ENCODE measurements at regions of chr2 and their contacts with region 1.

Region 1: GRCh38 chr2:230541934-230542380 is 126.0 kb downstream of the SP100 start:
- DNase-seq: no peak
- ATAC-seq: no peak
- H3K4me3 ChIP-seq: no peak overlapping the region
- H3K27ac ChIP-seq: no peak overlapping the region
- H3K4me1 ChIP-seq: no peaks in the 10 kb centered on the region
- H3K27me3 ChIP-seq: no peaks in the 10 kb centered on the region
- CTCF ChIP-seq: no peak

Region 2: GRCh38 chr2:230286048-230286447 is 255.9 kb before region 1 on chr2:
- intact Hi-C with region 1: loop called in 1 of 10 experiments (anchors 5 kb)
- DNase-seq: no peak
- ATAC-seq: peak in 1 of 8 donors; percentile 45
- H3K4me3 ChIP-seq: no peak overlapping the region
- H3K27ac ChIP-seq: peak overlapping the region in 4 of 10 donors; percentile 26 to 54 (median 50)
- H3K4me1 ChIP-seq: peaks cover 0 to 19% (median 0%) of the 10 kb centered on the region in 9 donors
- H3K27me3 ChIP-seq: peaks cover 0 to 3% (median 0%) of the 10 kb centered on the region in 7 donors
- CTCF ChIP-seq: no peak